ENCODE measurements at regions of chr2 and their contacts with region 1.

Region 1: DNA sequence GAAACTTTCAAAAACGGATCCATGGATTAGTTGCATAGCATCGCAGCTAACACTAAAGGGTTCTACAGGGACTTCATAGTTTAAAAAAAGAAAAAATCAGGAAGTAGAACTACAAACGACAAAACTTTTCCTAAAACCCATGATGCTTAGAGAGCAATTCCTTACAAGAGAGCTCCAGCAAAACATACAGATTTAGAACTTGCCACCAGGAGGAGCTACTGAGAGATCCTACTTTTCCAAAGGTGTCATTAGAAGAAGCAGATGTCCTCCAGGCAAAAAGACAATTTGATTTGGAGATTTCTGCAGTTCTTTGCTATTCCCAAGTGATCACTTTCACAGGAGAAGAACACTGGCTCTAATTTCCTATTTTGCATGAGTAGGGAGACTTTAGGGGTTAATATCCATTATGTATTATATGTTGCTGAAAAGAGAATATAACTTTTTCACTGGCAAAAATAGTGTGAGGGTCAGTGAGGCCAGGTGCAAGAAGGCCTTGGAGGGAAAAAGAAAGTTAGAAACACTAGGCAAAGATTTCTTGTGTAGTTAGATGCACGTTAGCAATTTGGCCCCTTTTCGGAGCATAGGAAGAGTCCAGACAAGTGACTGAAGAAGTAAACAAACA is 436.2 kb downstream of the SUCLG1 start:
- DNase-seq: peak; percentile 79
- H3K4me3 Mint-ChIP-seq: no peak overlapping the region
- H3K27ac Mint-ChIP-seq: no peak overlapping the region
- H3K4me1 Mint-ChIP-seq: peaks cover 6% of the 10 kb centered on the region
- H3K27me3 Mint-ChIP-seq: no peaks in the 10 kb centered on the region
- CTCF ChIP-seq: peak; percentile 71

Region 2: GRCh38 chr2:84033347-84033974 is 10.5 kb after region 1 on chr2:
- CTCF ChIA-PET with region 1: interaction called, 26 read pairs
- POLR2A ChIA-PET with region 1: no interaction called
- intact Hi-C with region 1: no loop called
- DNase-seq: peak; percentile 17
- H3K4me3 Mint-ChIP-seq: peak overlapping the region; percentile 52
- H3K27ac Mint-ChIP-seq: no peak overlapping the region
- H3K4me1 Mint-ChIP-seq: peaks cover 10% of the 10 kb centered on the region
- H3K27me3 Mint-ChIP-seq: no peaks in the 10 kb centered on the region
- CTCF ChIP-seq: no peak

Region 3: GRCh38 chr2:84055816-84056215 is 32.9 kb after region 1 on chr2:
- CTCF ChIA-PET with region 1: interaction called, 10 read pairs
- POLR2A ChIA-PET with region 1: no interaction called
- intact Hi-C with region 1: no loop called
- DNase-seq: peak; percentile 26
- H3K4me3 Mint-ChIP-seq: no peak overlapping the region
- H3K27ac Mint-ChIP-seq: peak overlapping the region; percentile 36
- H3K4me1 Mint-ChIP-seq: no peaks in the 10 kb centered on the region
- H3K27me3 Mint-ChIP-seq: no peaks in the 10 kb centered on the region
- CTCF ChIP-seq: no peak

Region 4: DNA sequence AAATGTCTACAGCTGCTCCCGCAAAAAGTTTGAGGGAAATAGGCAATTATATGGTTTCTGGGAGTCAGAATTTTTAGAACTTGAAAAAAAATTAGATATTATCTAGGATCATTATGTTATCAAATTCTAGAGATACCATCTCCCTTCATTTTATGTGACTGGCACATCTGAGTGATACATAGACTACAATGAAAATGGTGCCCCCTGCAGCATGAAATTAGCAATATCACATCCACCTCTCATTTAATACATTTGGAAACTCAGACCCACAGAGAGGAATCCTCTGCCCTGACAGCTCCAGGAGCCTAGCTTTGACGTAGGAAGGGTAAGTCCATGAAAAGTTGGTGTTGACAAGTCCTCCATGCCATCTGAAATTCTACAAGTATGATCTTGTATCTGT is 54.6 kb after region 1 on chr2:
- CTCF ChIA-PET with region 1: interaction called, 19 read pairs
- POLR2A ChIA-PET with region 1: no interaction called
- intact Hi-C with region 1: loop called (anchors 1 kb)
- DNase-seq: peak; percentile 67
- H3K4me3 Mint-ChIP-seq: no peak overlapping the region
- H3K27ac Mint-ChIP-seq: no peak overlapping the region
- H3K4me1 Mint-ChIP-seq: no peaks in the 10 kb centered on the region
- H3K27me3 Mint-ChIP-seq: no peaks in the 10 kb centered on the region
- CTCF ChIP-seq: peak; percentile 63

Region 5: GRCh38 chr2:84257831-84258230 is 234.9 kb after region 1 on chr2:
- CTCF ChIA-PET with region 1: interaction called, 14 read pairs
- POLR2A ChIA-PET with region 1: no interaction called
- intact Hi-C with region 1: loop called (anchors 1 kb)
- DNase-seq: peak; percentile 46
- H3K4me3 Mint-ChIP-seq: no peak overlapping the region
- H3K27ac Mint-ChIP-seq: no peak overlapping the region
- H3K4me1 Mint-ChIP-seq: no peaks in the 10 kb centered on the region
- H3K27me3 Mint-ChIP-seq: no peaks in the 10 kb centered on the region
- CTCF ChIP-seq: peak; percentile 27

Region 6: DNA sequence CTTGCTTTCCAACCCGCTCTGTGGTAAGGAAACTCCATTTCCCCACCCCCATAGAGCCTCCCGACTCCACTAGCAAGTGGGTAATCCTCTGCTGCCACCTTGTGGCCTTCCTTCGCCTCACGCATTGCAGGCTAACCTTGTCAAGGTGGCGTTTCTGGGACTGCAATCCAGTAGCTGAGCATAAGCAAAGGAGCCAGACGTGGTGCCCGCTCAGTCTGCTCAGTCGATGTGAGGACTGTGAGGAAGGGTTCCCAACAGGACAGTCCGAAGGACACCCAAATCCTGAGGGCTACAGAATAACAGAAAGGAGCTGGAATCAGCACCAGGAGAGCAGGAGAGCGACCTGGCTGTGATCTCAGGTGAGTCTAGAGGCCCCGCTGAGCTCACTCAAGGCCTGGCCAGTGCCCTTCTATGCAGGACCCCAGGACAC is 292.0 kb after region 1 on chr2:
- CTCF ChIA-PET with region 1: interaction called, 21 read pairs
- POLR2A ChIA-PET with region 1: no interaction called
- intact Hi-C with region 1: no loop called
- DNase-seq: peak; percentile 87
- H3K4me3 Mint-ChIP-seq: no peak overlapping the region
- H3K27ac Mint-ChIP-seq: no peak overlapping the region
- H3K4me1 Mint-ChIP-seq: peaks cover 6% of the 10 kb centered on the region
- H3K27me3 Mint-ChIP-seq: peaks cover 16% of the 10 kb centered on the region
- CTCF ChIP-seq: peak; percentile 92

Measured in MCF 10A (cell line).